ENCODE measurements at regions of chr2 and their contacts with region 1.

Region 1: DNA sequence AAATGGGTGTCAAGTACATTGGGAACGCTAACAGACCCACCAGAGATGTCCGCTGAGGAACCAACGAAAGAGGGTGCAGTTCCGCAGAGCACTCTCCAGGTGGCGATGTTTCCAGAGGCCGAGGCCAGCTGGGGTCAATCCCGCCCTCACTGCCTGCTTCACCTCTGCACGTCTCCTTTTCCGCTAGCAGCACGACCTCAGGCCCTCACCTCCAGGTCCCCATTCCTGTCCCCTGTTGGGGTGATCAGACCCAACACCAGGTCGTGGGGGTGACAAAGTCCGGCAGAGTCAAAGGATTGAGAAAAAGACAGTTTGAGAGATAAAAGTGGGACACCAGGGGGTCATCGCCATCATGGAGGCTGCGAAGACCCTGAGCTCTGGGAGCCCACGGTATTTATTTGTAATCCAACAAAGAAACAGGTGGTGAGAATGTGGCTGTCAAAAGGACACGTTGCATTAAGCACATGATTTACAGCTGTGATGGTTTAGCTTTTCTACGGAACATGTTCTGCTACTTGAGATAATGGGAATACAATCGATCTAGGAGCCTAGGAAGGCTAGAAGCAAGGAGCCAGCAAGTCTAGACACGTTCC is 27.3 kb downstream of the ZAP70 start:
- DNase-seq: peak; percentile 65 to 80
- ATAC-seq: peak; percentile 79 to 88
- H3K4me3 ChIP-seq: no peak overlapping the region
- H3K27ac ChIP-seq: no peak overlapping the region
- H3K4me1 ChIP-seq: no peaks in the 10 kb centered on the region
- CTCF ChIP-seq: peak; percentile 65
- EP300 ChIP-seq: no peak
- POLR2A ChIP-seq: no peak
- RAD21 ChIP-seq: peak; percentile 52 to 56

Region 2: DNA sequence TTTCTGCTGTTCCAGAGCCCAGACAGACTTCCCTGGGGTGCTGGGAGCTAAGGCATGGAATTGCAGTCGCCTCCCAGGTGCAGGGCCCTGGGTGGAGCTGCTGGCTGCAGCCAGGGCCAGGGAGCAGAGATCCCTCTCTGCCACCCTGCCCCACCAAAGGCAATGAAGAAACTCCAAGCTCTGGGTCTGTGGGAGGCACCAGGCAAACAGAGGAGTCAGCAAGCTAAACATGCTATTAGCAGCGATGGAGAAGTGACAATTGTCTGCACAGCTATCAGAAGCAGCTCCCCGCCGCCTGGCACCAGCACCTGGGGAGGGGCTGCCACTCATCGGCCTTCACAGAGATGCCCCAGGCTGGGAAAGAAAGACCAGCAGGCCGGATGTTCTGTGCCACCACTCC is 122.8 kb before region 1 on chr2:
- CTCF ChIA-PET with region 1: no interaction called
- POLR2A ChIA-PET with region 1: no interaction called
- DNase-seq: no peak
- ATAC-seq: no peak
- H3K4me3 ChIP-seq: no peak overlapping the region
- H3K27ac ChIP-seq: no peak overlapping the region
- H3K4me1 ChIP-seq: no peaks in the 10 kb centered on the region
- CTCF ChIP-seq: no peak
- EP300 ChIP-seq: no peak
- POLR2A ChIP-seq: no peak
- RAD21 ChIP-seq: no peak

Region 3: DNA sequence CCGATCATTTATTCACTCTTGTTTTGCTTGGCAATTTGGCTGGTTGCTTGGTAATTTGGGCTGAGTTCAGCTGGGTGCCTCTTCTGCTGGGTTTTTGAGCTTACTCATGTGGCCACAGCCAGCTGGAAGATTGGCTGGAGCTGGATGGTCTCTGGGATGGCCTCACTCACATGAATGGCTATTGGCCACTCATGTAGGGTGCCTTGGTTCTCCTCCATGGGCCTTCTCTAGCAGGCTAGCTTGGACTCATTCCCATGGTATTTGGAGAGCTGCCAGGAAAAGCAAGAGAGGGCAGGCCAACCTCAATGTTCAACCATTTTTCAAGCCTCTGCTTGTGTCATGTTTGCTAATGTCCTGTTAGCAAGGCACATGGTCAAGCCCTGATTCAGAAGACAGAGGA is 10.4 kb before region 1 on chr2:
- CTCF ChIA-PET with region 1: interaction called, 26 read pairs
- POLR2A ChIA-PET with region 1: no interaction called
- DNase-seq: no peak
- ATAC-seq: no peak
- H3K4me3 ChIP-seq: no peak overlapping the region
- H3K27ac ChIP-seq: no peak overlapping the region
- H3K4me1 ChIP-seq: peaks cover 3% of the 10 kb centered on the region; the same call in 1 of the 3 replicates
- CTCF ChIP-seq: no peak
- EP300 ChIP-seq: no peak
- POLR2A ChIP-seq: no peak
- RAD21 ChIP-seq: no peak

Region 4: GRCh38 chr2:97751752-97752151 is 11.1 kb after region 1 on chr2:
- CTCF ChIA-PET with region 1: interaction called, 27 read pairs
- POLR2A ChIA-PET with region 1: no interaction called
- DNase-seq: no peak
- ATAC-seq: no peak
- H3K4me3 ChIP-seq: no peak overlapping the region
- H3K27ac ChIP-seq: no peak overlapping the region
- H3K4me1 ChIP-seq: no peaks in the 10 kb centered on the region
- CTCF ChIP-seq: no peak
- EP300 ChIP-seq: no peak
- POLR2A ChIP-seq: no peak
- RAD21 ChIP-seq: no peak

Region 5: DNA sequence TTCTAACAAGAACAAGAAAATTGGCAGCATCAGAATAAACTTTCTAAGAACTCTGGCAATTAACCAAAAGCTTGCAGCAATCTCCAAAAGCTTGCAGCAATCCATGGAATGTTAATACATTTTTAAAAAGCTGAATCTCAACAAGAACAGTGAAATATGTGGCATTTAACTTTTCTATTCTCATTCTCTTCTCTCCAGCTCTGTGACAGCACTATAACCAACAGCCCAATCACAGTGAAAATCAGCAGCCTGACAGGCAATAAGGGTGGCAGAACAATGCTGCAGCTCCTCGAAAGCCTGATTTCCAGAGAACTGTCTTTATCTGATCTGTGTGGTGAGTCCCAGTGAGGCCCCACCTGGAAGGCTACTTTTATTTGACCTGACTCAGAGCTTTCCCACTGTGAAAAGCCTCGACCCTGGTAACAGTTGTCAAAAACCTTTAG is 195.1 kb after region 1 on chr2:
- CTCF ChIA-PET with region 1: no interaction called
- POLR2A ChIA-PET with region 1: no interaction called
- DNase-seq: peak in 1 of 2 experiments; percentile 5
- ATAC-seq: peak in 1 of 2 experiments; percentile 71; a peak in 3 of 6 replicates
- H3K4me3 ChIP-seq: no peak overlapping the region
- H3K27ac ChIP-seq: no peak overlapping the region
- H3K4me1 ChIP-seq: peaks cover 20% of the 10 kb centered on the region
- CTCF ChIP-seq: no peak
- EP300 ChIP-seq: no peak
- POLR2A ChIP-seq: no peak
- RAD21 ChIP-seq: no peak

Region 6: DNA sequence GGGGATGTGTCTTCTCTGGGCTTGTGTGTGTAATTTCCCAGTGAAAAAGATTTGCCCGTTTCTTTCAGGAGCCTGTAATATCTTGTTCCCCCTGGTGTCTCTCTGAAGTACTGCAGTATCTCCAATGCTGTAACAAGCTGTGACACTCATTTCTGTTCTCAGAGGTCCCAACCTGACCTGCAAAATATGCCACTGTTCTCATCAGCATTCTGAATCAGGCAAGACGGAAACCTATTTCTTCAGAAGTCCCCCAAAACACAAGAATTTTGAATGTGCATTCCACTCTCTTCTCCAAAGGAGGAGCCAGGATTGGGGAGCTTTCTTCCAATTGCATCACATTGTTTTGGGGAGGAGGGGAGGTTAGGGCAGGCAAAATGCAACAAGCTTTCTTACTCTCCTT is 528.6 kb after region 1 on chr2:
- CTCF ChIA-PET with region 1: interaction called, 18 read pairs
- POLR2A ChIA-PET with region 1: no interaction called
- DNase-seq: peak; percentile 44 to 51
- ATAC-seq: peak; percentile 74 to 80; a peak in 5 of 6 replicates
- H3K4me3 ChIP-seq: no peak overlapping the region
- H3K27ac ChIP-seq: no peak overlapping the region; a peak in 1 of 6 replicates
- H3K4me1 ChIP-seq: no peaks in the 10 kb centered on the region
- CTCF ChIP-seq: peak; percentile 53
- EP300 ChIP-seq: no peak
- POLR2A ChIP-seq: no peak
- RAD21 ChIP-seq: peak; percentile 55 to 69; a peak in 4 of 5 replicates

Region 7: DNA sequence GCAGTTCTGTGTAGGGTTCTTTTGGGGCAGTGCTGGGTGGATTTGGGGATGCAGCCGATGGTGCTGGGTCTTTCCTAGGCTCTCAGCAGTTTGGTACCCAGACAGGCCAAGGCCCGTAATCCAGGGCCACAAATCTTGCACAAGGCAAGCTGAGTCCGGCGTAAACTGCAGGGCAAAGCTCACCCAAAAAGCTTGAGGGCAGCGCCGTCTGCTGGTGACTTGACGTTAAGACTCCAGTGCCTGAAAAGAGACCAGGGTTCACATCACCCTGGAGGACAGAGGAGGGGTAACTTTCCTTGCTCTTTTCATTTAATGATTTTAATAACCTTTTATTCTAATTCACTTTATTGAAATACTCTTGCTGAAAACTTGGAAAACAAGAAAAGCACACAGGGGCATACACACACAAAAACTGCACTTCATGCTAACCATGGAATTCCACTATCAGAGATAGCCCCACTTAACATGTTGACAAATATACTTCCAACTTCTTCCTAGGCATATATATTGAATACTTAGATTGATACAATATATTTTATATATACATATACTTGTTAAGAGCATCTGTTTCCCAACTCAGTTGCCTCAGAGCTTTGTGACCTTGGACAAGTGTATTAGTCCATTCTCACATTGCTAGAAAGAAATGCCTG is 644.5 kb after region 1 on chr2:
- CTCF ChIA-PET with region 1: interaction called, 11 read pairs
- POLR2A ChIA-PET with region 1: no interaction called
- DNase-seq: peak; percentile 76 to 78
- ATAC-seq: peak; percentile 87 to 98
- H3K4me3 ChIP-seq: no peak overlapping the region
- H3K27ac ChIP-seq: no peak overlapping the region
- H3K4me1 ChIP-seq: no peaks in the 10 kb centered on the region
- CTCF ChIP-seq: peak; percentile 95
- EP300 ChIP-seq: no peak
- POLR2A ChIP-seq: no peak
- RAD21 ChIP-seq: peak; percentile 97 to 99

Region 8: GRCh38 chr2:98465456-98466226 is 725.0 kb after region 1 on chr2:
- CTCF ChIA-PET with region 1: no interaction called
- POLR2A ChIA-PET with region 1: no interaction called
- DNase-seq: no peak
- ATAC-seq: no peak; a peak in 1 of 6 replicates
- H3K4me3 ChIP-seq: no peak overlapping the region
- H3K27ac ChIP-seq: 0 out of 6 replicates have a peak overlapping the region, but pooled peaks of 1 of the 2 experiments have one; percentile 26
- H3K4me1 ChIP-seq: peaks cover 15% of the 10 kb centered on the region
- CTCF ChIP-seq: no peak
- EP300 ChIP-seq: no peak
- POLR2A ChIP-seq: no peak
- RAD21 ChIP-seq: no peak